MCF 10A (cell line): ENCODE measurements at regions of chr9 and their contacts with region 1.

Region 1: DNA sequence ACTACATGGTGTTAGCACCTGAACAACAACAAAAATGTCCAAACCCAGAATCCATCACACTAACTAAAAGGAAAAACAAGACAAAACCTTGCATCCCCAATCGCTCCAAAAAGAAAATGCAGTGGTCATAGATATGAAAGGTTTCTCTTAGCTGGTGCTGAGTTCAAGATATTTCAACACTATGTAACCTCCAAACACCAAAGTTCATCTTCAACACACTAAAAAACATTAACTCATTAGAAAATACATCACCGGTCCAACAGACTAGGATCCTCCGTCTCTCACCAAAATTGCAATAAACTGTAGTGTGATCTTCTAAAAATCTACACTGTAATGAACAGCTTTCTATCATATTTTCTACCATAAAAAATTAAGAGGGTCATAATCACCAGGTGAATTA is 60.8 kb downstream of the ECPAS start:
- DNase-seq: no peak
- H3K4me3 Mint-ChIP-seq: no peak overlapping the region
- H3K27ac Mint-ChIP-seq: peak overlapping the region; percentile 3
- H3K4me1 Mint-ChIP-seq: peaks cover 4% of the 10 kb centered on the region
- H3K27me3 Mint-ChIP-seq: no peaks in the 10 kb centered on the region
- CTCF ChIP-seq: no peak

Region 2: DNA sequence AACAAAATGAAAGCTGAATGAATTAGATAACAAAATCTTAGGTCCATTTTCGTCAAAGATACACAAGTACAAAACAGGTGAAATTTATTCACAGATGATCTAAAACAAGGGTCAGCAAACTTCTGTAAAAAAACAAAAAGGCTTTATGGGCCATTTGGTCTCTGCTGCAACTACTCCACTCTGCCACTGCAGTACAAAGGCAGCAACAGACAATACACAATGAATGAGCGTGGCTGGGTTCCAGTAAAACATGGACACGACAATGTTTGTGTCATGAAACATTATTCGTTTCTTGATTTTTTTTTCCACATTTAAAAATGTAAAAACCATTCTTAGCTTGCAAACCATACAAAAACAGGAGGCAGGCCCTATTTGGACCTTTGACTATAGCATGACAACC is 11.1 kb before region 1 on chr9:
- CTCF ChIA-PET with region 1: interaction called, 3 read pairs
- POLR2A ChIA-PET with region 1: interaction called, 11 read pairs
- intact Hi-C with region 1: no loop called
- DNase-seq: no peak
- H3K4me3 Mint-ChIP-seq: no peak overlapping the region
- H3K27ac Mint-ChIP-seq: no peak overlapping the region
- H3K4me1 Mint-ChIP-seq: no peaks in the 10 kb centered on the region
- H3K27me3 Mint-ChIP-seq: no peaks in the 10 kb centered on the region
- CTCF ChIP-seq: no peak